Prostate gland (tissue), 2 donors: ENCODE measurements at regions of chr1 and their contacts with region 1.

Region 1: GRCh38 chr1:31394628-31395193 is 18.3 kb upstream of the SERINC2 start:
- DNase-seq: peak; percentile 84
- H3K4me3 ChIP-seq: peak overlapping the region in 1 of 2 donors; percentile 28
- H3K27ac ChIP-seq: peak overlapping the region in 1 of 2 donors; percentile 7
- H3K4me1 ChIP-seq: peaks cover 1% of the 10 kb centered on the region
- H3K27me3 ChIP-seq: no peaks in the 10 kb centered on the region
- CTCF ChIP-seq: peak; percentile 58 to 92 (median 79)
- POLR2A ChIP-seq: peak; percentile 22

Region 2: GRCh38 chr1:31487143-31487542 is 92.4 kb after region 1 on chr1:
- intact Hi-C with region 1: no loop called
- DNase-seq: no peak
- H3K4me3 ChIP-seq: no peak overlapping the region
- H3K27ac ChIP-seq: no peak overlapping the region
- H3K4me1 ChIP-seq: no peaks in the 10 kb centered on the region
- H3K27me3 ChIP-seq: no peaks in the 10 kb centered on the region
- CTCF ChIP-seq: no peak
- POLR2A ChIP-seq: no peak

Region 3: GRCh38 chr1:31548907-31549808 is 154.4 kb after region 1 on chr1:
- intact Hi-C with region 1: loop called (anchors 10 kb)
- DNase-seq: peak; percentile 83
- H3K4me3 ChIP-seq: no peak overlapping the region
- H3K27ac ChIP-seq: no peak overlapping the region
- H3K4me1 ChIP-seq: peaks cover 6% of the 10 kb centered on the region
- H3K27me3 ChIP-seq: no peaks in the 10 kb centered on the region
- CTCF ChIP-seq: peak; percentile 91 to 99 (median 94)
- POLR2A ChIP-seq: no peak